A673 (cell line): ENCODE measurements at regions of chr2 and their contacts with region 1.

Region 1: GRCh38 chr2:27471961-27472360 is 17.6 kb downstream of the IFT172 start:
- DNase-seq: no peak
- H3K4me3 ChIP-seq: no peak overlapping the region
- H3K27ac ChIP-seq: no peak overlapping the region
- H3K4me1 ChIP-seq: no peaks in the 10 kb centered on the region
- H3K27me3 ChIP-seq: no peaks in the 10 kb centered on the region
- CTCF ChIP-seq: no peak

Region 2: GRCh38 chr2:27461118-27461517 is 10.8 kb before region 1 on chr2:
- CTCF ChIA-PET with region 1: no interaction called
- POLR2A ChIA-PET with region 1: interaction called, 11 read pairs
- intact Hi-C with region 1: no loop called
- DNase-seq: no peak
- H3K4me3 ChIP-seq: no peak overlapping the region
- H3K27ac ChIP-seq: no peak overlapping the region
- H3K4me1 ChIP-seq: no peaks in the 10 kb centered on the region
- H3K27me3 ChIP-seq: no peaks in the 10 kb centered on the region
- CTCF ChIP-seq: no peak

Region 3: DNA sequence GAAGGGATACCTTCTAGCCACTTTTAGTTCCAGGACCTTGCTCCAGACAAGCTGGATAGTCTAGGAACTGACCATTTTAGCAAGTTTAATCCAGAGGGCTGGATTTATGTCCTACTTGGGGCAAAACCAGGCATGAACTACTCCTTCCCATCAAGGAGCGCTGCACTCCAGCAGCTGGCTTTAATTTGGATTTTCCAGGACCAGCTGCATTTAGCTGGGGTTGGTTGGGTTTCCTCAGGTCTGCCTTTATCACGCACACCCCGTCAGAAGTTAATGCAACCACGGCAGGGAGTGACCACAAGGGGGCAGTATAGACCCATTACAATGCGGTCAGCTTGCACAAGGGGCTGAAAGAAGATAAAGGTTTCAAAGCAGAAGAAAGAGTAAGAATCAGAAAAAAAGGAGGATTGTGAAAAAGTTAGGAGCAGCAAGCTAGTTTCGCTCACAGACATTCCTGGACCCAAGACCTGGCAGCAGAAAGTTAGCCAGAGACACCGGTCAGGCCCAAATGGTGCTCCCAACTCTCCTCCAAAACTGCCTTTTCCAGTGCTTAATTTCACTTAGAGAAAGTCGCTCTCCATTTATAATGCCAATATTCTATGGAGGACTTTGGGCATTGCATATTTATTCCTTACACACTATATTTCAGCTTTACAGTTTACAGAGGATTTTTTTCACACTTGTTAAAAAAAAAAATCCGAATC is 231.8 kb after region 1 on chr2:
- CTCF ChIA-PET with region 1: no interaction called
- POLR2A ChIA-PET with region 1: no interaction called
- intact Hi-C with region 1: no loop called
- DNase-seq: peak; percentile 88
- H3K4me3 ChIP-seq: no peak overlapping the region
- H3K27ac ChIP-seq: no peak overlapping the region
- H3K4me1 ChIP-seq: no peaks in the 10 kb centered on the region
- H3K27me3 ChIP-seq: no peaks in the 10 kb centered on the region
- CTCF ChIP-seq: peak; percentile 96